Ovary (tissue), 10 donors: ENCODE measurements at regions of chr22 and their contacts with region 1.

Region 1: DNA sequence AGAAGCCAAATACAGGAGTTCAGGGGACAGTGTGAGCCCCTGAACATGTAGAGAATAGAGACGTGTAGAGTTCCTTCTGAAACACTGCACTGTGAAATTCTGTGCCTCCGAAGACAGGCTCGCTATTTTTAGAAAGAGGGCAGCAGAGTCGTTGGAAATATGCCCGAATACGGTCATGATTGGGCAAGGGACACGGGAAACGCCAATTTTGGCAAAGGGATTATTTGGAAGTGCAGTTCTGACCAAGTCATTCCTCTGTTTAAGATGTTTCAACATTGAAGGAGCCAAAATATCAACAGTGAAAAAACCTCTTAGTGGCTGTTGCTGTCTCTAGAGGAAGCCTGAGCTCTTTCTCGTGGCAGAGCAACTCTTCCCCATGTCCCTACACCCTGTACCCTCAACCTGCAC is 9.5 kb upstream of the CBX6 start:
- DNase-seq: peak; percentile 76 to 88 (median 84)
- H3K4me3 ChIP-seq: no peak overlapping the region
- H3K27ac ChIP-seq: peak overlapping the region; percentile 18 to 83
- H3K4me1 ChIP-seq: peaks cover 20% of the 10 kb centered on the region
- H3K27me3 ChIP-seq: no peaks in the 10 kb centered on the region
- CTCF ChIP-seq: peak in 1 of 3 donors; percentile 46
- EP300 ChIP-seq: peak; percentile 61
- POLR2A ChIP-seq: no peak

Region 2: DNA sequence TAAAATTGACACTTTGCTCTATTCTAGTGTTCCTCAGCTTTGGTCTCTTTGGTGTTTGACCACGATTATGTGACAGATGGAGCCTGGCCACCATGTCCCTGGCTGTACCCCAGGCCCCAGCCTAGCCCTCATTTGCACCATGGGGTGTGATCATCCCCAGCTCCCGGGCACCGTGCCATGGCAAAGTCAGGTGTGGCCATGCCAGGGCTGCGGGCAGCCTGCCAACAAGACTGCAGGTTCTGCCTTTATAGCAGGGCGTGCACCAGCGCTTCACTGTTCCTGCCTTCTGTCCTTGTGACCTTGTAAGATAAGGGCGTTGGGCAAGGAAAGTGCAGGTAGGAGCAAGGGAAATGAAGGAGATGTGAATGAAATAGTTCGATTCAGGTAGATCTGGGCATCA is 53.6 kb after region 1 on chr22:
- intact Hi-C with region 1: loop called in 1 of 4 experiments (anchors 5 kb)
- DNase-seq: peak in 1 of 5 donors; percentile 46
- H3K4me3 ChIP-seq: no peak overlapping the region
- H3K27ac ChIP-seq: no peak overlapping the region
- H3K4me1 ChIP-seq: no peaks in the 10 kb centered on the region
- H3K27me3 ChIP-seq: no peaks in the 10 kb centered on the region
- CTCF ChIP-seq: no peak
- EP300 ChIP-seq: no peak
- POLR2A ChIP-seq: no peak